Panc1 (cell line): ENCODE measurements at regions of chr20 and their contacts with region 1.

Region 1: GRCh38 chr20:63531723-63532448 is 5.3 kb downstream of the PTK6 start:
- DNase-seq: no peak
- ATAC-seq: no peak
- H3K4me3 ChIP-seq: no peak overlapping the region
- H3K27ac ChIP-seq: no peak overlapping the region
- H3K4me1 ChIP-seq: peaks cover 11% of the 10 kb centered on the region
- H3K27me3 ChIP-seq: no peaks in the 10 kb centered on the region
- CTCF ChIP-seq: no peak

Region 2: DNA sequence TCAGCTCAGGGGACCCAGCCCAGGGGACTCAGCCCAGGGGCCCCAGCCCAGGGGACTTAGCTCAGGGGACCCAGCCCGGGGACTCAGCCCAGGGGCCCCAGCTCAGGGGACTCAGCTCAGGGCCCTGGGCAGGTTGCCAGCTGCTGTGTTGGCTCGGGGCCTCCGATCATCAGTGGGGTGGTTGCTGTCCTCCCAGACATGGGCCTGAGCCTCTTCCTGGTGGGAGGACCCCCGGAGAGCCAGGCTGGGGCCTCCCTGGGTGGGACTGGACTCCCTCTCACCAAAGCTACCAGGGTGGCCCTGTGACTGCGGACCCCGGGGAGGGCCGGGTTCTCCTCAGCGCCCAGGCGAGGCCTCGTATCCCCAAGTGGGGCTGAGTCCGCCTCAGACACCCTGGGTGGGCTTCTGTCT is 234.5 kb before region 1 on chr20:
- CTCF ChIA-PET with region 1: no interaction called
- POLR2A ChIA-PET with region 1: interaction called, 10 read pairs
- in situ Hi-C with region 1: no loop called
- intact Hi-C with region 1: no loop called
- DNase-seq: no peak
- ATAC-seq: no peak
- H3K4me3 ChIP-seq: no peak overlapping the region
- H3K27ac ChIP-seq: no peak overlapping the region
- H3K4me1 ChIP-seq: no peaks in the 10 kb centered on the region; the same call in 1 of the 2 replicates
- H3K27me3 ChIP-seq: 0 out of 2 replicates have a peak, but pooled peaks cover 2% of the 10 kb centered on the region
- CTCF ChIP-seq: no peak

Region 3: GRCh38 chr20:63482856-63483695 is 48.8 kb before region 1 on chr20:
- CTCF ChIA-PET with region 1: no interaction called
- POLR2A ChIA-PET with region 1: no interaction called
- in situ Hi-C with region 1: no loop called
- intact Hi-C with region 1: no loop called
- DNase-seq: no peak
- ATAC-seq: peak; percentile 39
- H3K4me3 ChIP-seq: no peak overlapping the region
- H3K27ac ChIP-seq: no peak overlapping the region
- H3K4me1 ChIP-seq: peaks cover 20% of the 10 kb centered on the region
- H3K27me3 ChIP-seq: no peaks in the 10 kb centered on the region
- CTCF ChIP-seq: no peak